ENCODE measurements at regions of chr18 and their contacts with region 1.

Region 1: GRCh38 chr18:45974088-45974536 is 7.0 kb upstream of the EPG5 start:
- DNase-seq: peak; percentile 51
- H3K4me3 Mint-ChIP-seq: no peak overlapping the region
- H3K27ac Mint-ChIP-seq: no peak overlapping the region
- H3K4me1 Mint-ChIP-seq: peaks cover 7% of the 10 kb centered on the region
- H3K27me3 Mint-ChIP-seq: peaks cover 4% of the 10 kb centered on the region

Region 2: DNA sequence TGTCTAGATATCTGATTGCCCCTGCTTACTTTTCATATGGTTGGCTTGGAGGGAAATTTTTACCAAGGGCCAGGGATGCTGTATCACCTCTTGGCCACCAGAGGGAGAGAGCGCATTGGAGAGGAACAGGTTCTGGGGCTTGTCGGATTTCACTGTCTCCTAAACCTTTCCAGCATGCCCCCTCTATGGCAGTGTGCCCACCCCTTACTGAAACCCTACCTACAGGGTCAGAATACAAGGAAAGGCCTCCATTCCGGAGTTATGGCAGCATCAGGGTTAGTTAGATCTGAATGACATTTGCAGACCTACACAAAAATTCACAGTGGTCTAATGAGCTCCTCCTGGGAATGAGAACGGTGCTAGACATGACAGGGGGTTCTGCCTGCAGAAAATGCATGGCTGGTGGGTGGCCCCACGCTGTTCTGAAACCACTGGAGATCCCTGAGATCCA is 353.0 kb before region 1 on chr18:
- intact Hi-C with region 1: loop called (anchors 1 kb)
- DNase-seq: peak; percentile 9
- H3K4me3 Mint-ChIP-seq: no peak overlapping the region
- H3K27ac Mint-ChIP-seq: no peak overlapping the region
- H3K4me1 Mint-ChIP-seq: no peaks in the 10 kb centered on the region
- H3K27me3 Mint-ChIP-seq: peaks cover 15% of the 10 kb centered on the region

Region 3: DNA sequence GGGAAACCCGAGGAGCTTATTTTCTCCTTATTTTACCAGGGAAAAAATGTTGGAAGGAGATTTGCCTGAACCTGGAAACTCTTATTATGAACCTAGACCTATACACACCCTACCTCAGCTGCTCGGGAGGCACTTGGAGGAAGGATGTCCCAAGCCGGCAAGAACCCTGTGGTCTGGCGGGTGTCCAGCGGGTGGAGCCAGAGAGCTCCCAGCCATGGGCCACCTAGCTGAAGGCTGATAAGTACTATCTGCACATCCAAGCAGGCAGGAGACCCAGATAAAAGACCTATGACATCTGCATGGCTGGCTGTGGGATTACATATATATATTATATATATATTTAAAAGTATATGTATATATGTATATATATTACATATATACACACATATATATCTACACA is 251.2 kb before region 1 on chr18:
- intact Hi-C with region 1: loop called (anchors 1 kb)
- DNase-seq: peak; percentile 54
- H3K4me3 Mint-ChIP-seq: no peak overlapping the region
- H3K27ac Mint-ChIP-seq: no peak overlapping the region
- H3K4me1 Mint-ChIP-seq: no peaks in the 10 kb centered on the region
- H3K27me3 Mint-ChIP-seq: peaks cover 21% of the 10 kb centered on the region

Region 4: DNA sequence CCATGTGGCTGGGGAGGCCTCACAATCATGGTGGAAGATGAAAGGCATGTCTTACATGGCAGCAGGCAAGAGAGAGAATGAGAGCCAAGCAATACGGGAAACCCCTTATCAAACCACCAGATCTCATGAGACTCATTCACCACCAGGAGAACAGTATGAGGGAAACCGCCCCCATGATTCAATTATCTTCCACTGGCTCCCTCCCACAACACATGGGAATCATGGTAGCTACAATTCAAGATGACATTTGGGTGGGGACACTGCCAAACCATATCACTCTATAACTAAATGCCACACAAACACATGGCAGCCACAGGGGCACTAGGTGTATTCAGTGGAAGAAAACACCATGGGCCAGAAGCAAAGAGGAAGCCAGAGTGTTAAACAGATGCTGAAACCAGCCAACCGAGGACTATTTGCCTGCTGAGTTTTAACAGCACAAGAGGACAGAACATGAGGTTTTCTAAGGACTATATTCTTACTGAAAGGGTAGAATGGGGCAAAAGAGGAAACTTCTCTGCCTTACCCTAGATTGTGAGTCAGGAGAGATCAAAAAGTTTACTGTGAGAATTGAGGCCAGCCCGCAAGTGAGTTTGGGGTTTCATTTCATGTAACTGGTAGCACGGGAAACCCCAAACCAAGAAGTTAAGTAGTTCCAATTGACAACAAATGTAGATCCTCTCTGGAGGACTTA is 99.5 kb before region 1 on chr18:
- intact Hi-C with region 1: loop called (anchors 1 kb)
- DNase-seq: peak; percentile 67
- H3K4me3 Mint-ChIP-seq: peak overlapping the region; percentile 11
- H3K27ac Mint-ChIP-seq: peak overlapping the region; percentile 90
- H3K4me1 Mint-ChIP-seq: peaks cover 32% of the 10 kb centered on the region
- H3K27me3 Mint-ChIP-seq: peaks cover 2% of the 10 kb centered on the region

Region 5: GRCh38 chr18:46028536-46028891 is 54.4 kb after region 1 on chr18:
- intact Hi-C with region 1: loop called (anchors 1 kb)
- DNase-seq: no peak
- H3K4me3 Mint-ChIP-seq: peak overlapping the region; percentile 86
- H3K27ac Mint-ChIP-seq: peak overlapping the region; percentile 59
- H3K4me1 Mint-ChIP-seq: peaks cover 14% of the 10 kb centered on the region
- H3K27me3 Mint-ChIP-seq: peaks cover 21% of the 10 kb centered on the region